ENCODE measurements at regions of chr6 and their contacts with region 1.

Region 1: DNA sequence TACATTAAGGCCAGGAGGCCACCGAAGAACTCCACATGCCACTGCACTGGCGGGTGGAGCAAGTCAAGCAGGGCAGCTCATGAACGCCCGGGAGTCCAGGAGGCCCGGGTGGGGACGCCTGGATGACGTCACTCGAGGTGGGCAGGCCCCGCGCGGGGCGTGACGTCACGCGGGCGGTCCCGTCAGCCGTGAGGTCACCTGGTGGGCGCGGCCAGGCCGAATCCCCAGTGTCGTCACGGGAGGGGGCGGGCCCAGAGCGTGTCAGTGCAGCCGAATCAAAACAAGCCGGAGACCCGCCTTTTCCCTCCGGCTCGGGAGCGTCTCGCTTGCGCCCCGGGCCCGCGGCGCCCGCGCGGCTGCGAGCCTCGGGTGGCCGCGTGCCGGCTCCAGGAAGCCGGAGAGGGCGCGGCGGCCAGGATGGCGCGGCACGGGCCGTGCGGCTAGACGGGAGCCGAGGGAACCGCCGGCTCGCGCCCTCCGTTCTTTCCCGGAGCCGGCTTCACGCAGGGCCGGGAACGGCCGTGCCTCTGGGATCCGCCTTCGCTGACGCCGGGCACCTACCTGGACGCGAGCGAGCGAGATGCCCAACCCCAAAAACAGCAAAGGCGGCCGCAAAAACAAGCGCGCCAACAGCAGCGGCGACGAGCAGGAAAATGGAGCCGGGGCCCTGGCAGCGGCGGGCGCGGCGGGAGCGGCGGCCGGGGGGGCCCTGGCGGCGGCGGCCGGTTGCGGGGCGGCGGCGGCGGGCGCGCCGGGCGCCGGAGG is at the start of gene HECA:
- DNase-seq: peak; percentile 99
- H3K4me3 ChIP-seq: peak within 1 kb of the TSS; percentile 78 to 98 (median 94)
- H3K27ac ChIP-seq: peak within 1 kb of the TSS; percentile 89 to 98 (median 96)
- H3K4me1 ChIP-seq: peaks cover 0 to 42% (median 32%) of the 10 kb centered on the region in 4 donors
- H3K27me3 ChIP-seq: no peaks in the 10 kb centered on the region
- CTCF ChIP-seq: no peak
- EP300 ChIP-seq: no peak
- POLR2A ChIP-seq: peak in 1 of 2 donors; percentile 14
- total RNA-seq, gene HECA: 33.5 to 42.1 (median 35.6) TPM

Region 2: GRCh38 chr6:138176652-138177232 is 958.3 kb before region 1 on chr6:
- intact Hi-C with region 1: no loop called
- DNase-seq: no peak
- H3K4me3 ChIP-seq: no peak overlapping the region
- H3K27ac ChIP-seq: no peak overlapping the region
- H3K4me1 ChIP-seq: no peaks in the 10 kb centered on the region
- H3K27me3 ChIP-seq: no peaks in the 10 kb centered on the region
- CTCF ChIP-seq: no peak
- EP300 ChIP-seq: no peak
- POLR2A ChIP-seq: no peak

Region 3: DNA sequence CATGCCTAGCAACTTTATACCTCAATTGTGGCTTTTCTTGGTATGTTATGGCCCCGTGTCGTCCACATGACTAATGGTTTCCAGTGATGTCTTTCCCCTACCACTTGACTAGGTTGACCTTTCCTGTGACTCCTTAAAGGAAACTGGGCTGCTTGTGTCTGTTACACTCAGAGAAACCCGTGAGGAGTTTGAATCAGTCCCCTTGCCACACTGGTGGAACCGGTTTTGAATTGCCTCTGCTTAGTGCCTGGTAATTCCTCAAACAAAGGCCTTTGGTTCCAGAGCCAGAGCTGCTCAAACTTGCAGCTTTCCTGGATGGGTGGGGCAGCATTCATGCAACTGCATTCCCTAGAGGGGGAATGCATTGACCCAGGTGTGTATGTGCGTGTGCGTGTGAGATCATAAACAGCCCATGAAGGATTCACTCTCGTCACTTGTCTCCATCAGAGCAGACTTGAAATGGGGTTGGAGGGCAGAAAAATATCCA is 317.1 kb before region 1 on chr6:
- intact Hi-C with region 1: loop called (anchors 10 kb)
- DNase-seq: no peak
- H3K4me3 ChIP-seq: no peak overlapping the region
- H3K27ac ChIP-seq: no peak overlapping the region
- H3K4me1 ChIP-seq: peaks cover 0 to 6% (median 0%) of the 10 kb centered on the region in 4 donors
- H3K27me3 ChIP-seq: no peaks in the 10 kb centered on the region
- CTCF ChIP-seq: no peak
- EP300 ChIP-seq: no peak
- POLR2A ChIP-seq: no peak

Region 4: DNA sequence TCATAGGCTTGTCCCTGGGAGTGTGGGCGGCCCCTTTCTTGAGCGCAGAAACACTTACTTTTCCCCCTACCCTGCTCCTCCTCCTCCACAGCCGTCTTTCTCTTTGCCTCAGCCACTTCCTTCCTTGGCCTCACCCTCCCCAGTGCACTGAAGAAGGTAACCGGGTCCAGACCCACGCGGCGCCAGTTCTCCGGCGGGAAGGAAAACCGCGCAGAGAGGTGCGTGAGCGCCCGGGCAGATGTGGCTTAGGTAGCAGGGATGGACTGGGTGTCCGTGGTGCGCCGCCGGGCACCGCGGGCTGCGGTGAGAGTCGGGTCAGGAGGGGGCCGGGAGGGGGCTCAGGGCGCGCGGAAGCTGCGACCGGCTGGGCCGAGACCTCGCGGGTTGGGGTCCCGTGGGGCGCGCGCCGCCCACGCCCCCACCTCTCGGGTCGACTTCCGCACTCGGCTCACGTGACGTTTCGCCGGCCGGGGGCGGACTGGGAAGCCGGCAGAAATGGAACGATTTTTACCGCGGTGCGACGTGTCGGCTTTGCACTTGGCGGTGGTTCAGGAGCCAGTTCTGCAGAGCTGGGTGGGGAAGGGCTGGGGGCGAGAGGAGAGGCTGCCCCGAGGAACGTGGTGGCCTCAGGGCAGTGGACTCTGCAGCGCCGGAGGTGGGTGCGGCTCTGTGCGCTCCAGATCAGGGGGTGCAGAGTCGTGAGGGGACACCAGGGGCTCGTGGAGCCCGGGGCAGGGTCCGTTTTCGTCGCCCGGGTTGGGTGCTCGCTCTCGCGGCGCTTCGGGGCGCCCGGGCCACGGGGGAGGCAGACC is 106.1 kb before region 1 on chr6 and contains the start of gene ABRACL:
- intact Hi-C with region 1: loop called (anchors 2 kb)
- DNase-seq: peak; percentile 81
- H3K4me3 ChIP-seq: peak within 1 kb of the TSS; percentile 74 to 96 (median 88)
- H3K27ac ChIP-seq: peak within 1 kb of the TSS; percentile 77 to 92 (median 86)
- H3K4me1 ChIP-seq: peaks cover 0 to 20% (median 8%) of the 10 kb centered on the region in 4 donors
- H3K27me3 ChIP-seq: no peaks in the 10 kb centered on the region
- CTCF ChIP-seq: no peak
- EP300 ChIP-seq: no peak
- POLR2A ChIP-seq: no peak
- total RNA-seq, gene ABRACL: 6.8 to 7.7 (median 7.4) TPM

Region 5: GRCh38 chr6:139050770-139051313 is 84.2 kb before region 1 on chr6:
- intact Hi-C with region 1: no loop called
- DNase-seq: no peak
- H3K4me3 ChIP-seq: no peak overlapping the region
- H3K27ac ChIP-seq: no peak overlapping the region
- H3K4me1 ChIP-seq: peaks cover 0 to 5% (median 0%) of the 10 kb centered on the region in 4 donors
- H3K27me3 ChIP-seq: no peaks in the 10 kb centered on the region
- CTCF ChIP-seq: no peak
- EP300 ChIP-seq: no peak
- POLR2A ChIP-seq: no peak

Region 6: DNA sequence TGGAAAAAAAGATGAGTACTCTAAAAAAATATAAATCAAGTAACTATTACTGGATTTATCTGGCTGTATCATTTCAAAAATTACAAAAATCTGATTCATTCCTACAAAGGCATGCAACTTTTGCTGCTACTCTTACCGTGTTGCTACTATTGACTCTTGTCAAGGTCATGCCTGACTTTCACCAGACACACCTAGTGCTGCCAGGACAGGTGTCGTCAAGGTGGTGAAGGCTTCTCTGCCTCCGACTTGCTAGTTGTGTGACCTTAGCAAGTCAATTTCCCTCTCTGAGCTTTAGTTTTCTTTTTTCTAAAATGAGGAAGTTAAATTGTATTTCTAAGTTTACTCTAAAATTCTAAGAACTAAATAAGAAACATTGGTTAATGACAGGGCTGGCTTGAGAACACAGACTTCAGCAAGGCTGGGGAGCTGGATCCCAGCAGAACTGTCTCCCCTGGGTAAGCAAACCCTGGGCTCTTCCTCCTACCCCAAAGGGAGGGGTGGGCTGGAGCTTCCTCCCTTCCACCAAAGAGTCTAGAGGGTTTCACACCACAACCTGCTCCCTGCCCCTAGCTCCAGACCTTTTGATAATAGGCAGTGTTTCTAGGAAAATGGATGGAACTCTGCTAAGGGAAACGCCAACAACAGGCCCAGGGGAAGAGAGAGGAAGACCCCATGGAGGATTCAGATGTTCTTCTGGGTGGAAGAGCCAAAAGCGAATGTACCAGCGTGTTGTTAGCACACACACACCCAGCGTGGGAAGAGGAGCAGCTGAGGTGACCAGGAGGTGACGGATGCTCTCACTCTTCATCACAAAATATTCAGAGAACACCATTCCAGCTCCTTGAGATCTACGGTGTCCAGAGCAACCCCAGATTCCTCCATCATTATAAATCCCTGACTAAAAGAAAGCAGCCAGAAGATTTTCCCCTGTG is 287.4 kb after region 1 on chr6:
- intact Hi-C with region 1: no loop called
- DNase-seq: no peak
- H3K4me3 ChIP-seq: no peak overlapping the region
- H3K27ac ChIP-seq: no peak overlapping the region
- H3K4me1 ChIP-seq: peaks cover 0 to 14% (median 6%) of the 10 kb centered on the region in 4 donors
- H3K27me3 ChIP-seq: no peaks in the 10 kb centered on the region
- CTCF ChIP-seq: no peak
- EP300 ChIP-seq: no peak
- POLR2A ChIP-seq: no peak

Region 7: GRCh38 chr6:139515511-139515910 is 380.5 kb after region 1 on chr6:
- intact Hi-C with region 1: no loop called
- DNase-seq: no peak
- H3K4me3 ChIP-seq: no peak overlapping the region
- H3K27ac ChIP-seq: no peak overlapping the region
- H3K4me1 ChIP-seq: peaks cover 0 to 3% (median under 1%) of the 10 kb centered on the region in 4 donors
- H3K27me3 ChIP-seq: no peaks in the 10 kb centered on the region
- CTCF ChIP-seq: no peak
- EP300 ChIP-seq: no peak
- POLR2A ChIP-seq: no peak

Measured in sigmoid colon (tissue), 7 donors.